T-cell (primary cell): ENCODE measurements at regions of chr1 and their contacts with region 1.

Region 1: GRCh38 chr1:59759156-59759925 is 55.4 kb upstream of the HOOK1 start:
- DNase-seq: peak; percentile 40 to 79 (median 60)
- ATAC-seq: peak; percentile 76 to 88 (median 79)
- H3K4me3 ChIP-seq: no peak overlapping the region
- H3K4me3 Mint-ChIP-seq: no peak overlapping the region
- H3K27ac ChIP-seq: no peak overlapping the region
- H3K27ac Mint-ChIP-seq: no peak overlapping the region
- H3K4me1 ChIP-seq: peaks cover 0 to 6% of the 10 kb centered on the region in 2 experiments
- H3K4me1 Mint-ChIP-seq: peaks cover 4 to 6% (median 4%) of the 10 kb centered on the region in 3 donors
- H3K27me3 ChIP-seq: peaks cover 0 to 4% of the 10 kb centered on the region in 2 experiments
- H3K27me3 Mint-ChIP-seq: no peaks in the 10 kb centered on the region

Region 2: GRCh38 chr1:58652651-58653184 is 1106.6 kb before region 1 on chr1:
- CTCF ChIA-PET with region 1: interaction called in 1 of 2 experiments, 13 read pairs
- POLR2A ChIA-PET with region 1: no interaction called
- DNase-seq: peak in 31 of 35 experiments; percentile 11 to 85 (median 38)
- ATAC-seq: peak; percentile 71 to 86 (median 82)
- H3K4me3 ChIP-seq: no peak overlapping the region
- H3K4me3 Mint-ChIP-seq: no peak overlapping the region
- H3K27ac ChIP-seq: no peak overlapping the region
- H3K27ac Mint-ChIP-seq: no peak overlapping the region
- H3K4me1 ChIP-seq: peaks cover 0 to 10% of the 10 kb centered on the region in 2 experiments
- H3K4me1 Mint-ChIP-seq: peaks cover 19 to 27% (median 25%) of the 10 kb centered on the region in 3 donors
- H3K27me3 ChIP-seq: no peaks in the 10 kb centered on the region
- H3K27me3 Mint-ChIP-seq: no peaks in the 10 kb centered on the region

Region 3: DNA sequence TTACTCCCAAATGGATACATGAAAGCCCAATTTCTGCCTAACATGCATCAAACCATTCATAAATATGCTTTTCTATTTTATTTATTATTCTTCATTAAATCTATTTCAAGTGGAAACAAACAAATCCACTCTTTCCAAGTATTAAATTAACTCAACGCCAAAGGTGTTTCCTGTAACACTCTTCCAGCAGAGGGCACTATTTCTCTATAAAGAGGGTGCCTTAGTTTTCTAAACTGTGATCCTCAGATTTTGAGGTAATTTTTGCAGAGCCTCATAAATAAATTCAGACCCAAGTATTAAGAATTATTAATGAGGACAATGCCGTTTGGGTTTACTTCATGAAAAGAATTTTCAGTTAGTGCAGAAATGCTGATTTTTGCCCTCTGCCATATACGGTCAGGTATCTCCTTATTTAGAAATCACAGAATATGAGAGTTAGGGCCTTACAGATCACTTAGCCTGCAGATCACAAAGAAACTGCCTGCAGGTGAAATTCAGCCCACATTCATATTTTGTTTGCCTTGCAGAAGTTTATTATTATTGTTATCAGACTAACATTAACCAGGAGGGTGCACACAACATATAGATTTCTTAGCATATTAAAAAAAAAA is 1019.4 kb before region 1 on chr1:
- CTCF ChIA-PET with region 1: interaction called, 4 to 12 read pairs
- POLR2A ChIA-PET with region 1: no interaction called
- DNase-seq: peak in 8 of 35 experiments; percentile 7 to 79 (median 23)
- ATAC-seq: peak in 3 of 4 experiments; percentile 50 to 56 (median 55)
- H3K4me3 ChIP-seq: no peak overlapping the region
- H3K4me3 Mint-ChIP-seq: no peak overlapping the region
- H3K27ac ChIP-seq: no peak overlapping the region
- H3K27ac Mint-ChIP-seq: no peak overlapping the region
- H3K4me1 ChIP-seq: no peaks in the 10 kb centered on the region
- H3K4me1 Mint-ChIP-seq: peaks cover 4 to 8% (median 6%) of the 10 kb centered on the region in 3 donors
- H3K27me3 ChIP-seq: peaks cover 0 to 5% of the 10 kb centered on the region in 2 experiments
- H3K27me3 Mint-ChIP-seq: peaks cover 2 to 6% of the 10 kb centered on the region in 2 donors